ENCODE measurements at regions of chr15 and their contacts with region 1.

Region 1: DNA sequence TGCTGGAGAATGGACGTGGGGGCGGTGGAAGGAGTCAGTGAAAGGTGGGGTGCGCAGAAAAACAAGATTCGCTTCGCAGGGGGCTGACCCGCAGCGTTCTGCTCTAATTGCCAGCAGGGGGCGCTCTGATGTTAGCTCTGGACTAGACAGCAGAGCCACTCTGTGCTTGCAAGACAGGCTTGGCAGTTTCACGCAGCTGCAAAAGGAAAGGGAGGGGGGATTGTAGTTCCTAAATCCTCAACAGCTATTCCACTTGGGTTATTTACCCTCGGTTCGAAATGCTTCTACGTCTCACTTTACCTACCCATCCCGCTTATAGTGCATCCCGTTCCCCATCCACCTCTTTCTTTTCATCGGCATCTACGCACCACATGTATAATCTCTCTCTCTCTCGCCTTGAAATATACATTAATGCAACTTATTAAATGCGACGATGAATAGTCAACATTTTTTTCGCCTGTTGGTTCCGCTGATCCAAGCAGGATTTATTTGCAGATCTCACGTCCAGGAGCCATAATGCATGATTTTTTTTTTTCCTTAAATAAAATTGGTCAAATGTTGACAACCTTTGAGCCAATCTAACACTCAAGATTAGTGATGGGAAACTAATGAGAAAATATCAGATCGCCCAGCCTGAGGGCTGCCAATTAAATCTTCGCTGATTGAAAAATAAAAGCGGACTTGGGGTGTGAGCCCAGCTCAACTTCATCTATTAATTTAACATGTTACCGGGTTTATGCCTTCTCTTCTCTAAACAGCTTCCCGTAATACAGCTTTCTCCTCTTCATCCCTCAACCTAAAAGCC is 216.4 kb downstream of the MEIS2 start:
- DNase-seq: peak; percentile 84
- H3K4me3 Mint-ChIP-seq: no peak overlapping the region
- H3K27ac Mint-ChIP-seq: no peak overlapping the region
- H3K4me1 Mint-ChIP-seq: peaks cover 13% of the 10 kb centered on the region
- H3K27me3 Mint-ChIP-seq: peaks cover 90% of the 10 kb centered on the region

Region 2: DNA sequence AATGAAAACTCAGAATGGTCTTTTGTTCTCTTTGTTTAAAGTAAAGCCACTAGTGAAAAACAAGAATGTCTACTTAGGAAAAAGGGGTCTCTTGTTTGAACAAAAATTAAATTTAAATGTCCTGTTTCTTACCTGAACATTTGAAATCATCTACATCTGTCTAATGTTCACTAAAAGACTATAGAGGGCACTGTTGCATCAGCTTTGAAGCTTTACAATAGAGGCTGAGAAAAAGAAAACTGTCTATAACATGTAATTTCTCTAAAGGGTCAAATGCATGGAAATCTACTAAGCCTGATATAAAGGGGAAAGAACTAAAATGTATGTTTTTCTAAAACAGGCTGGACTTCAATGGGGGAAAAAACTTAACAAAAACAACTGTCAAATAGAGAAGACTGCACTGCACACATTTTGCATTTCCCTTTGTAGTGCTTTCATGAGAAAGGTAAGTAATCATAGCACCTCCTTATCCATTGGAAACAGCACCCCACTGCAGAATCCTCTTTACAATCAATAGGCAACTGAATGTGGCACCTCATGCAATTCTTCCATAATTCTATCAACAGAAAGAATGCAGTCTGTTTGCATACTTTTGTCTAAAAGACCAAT is 1364.3 kb before region 1 on chr15:
- CTCF ChIA-PET with region 1: no interaction called
- intact Hi-C with region 1: loop called (anchors 10 kb)
- DNase-seq: no peak
- H3K4me3 Mint-ChIP-seq: no peak overlapping the region
- H3K27ac Mint-ChIP-seq: no peak overlapping the region
- H3K4me1 Mint-ChIP-seq: peaks cover 6% of the 10 kb centered on the region
- H3K27me3 Mint-ChIP-seq: no peaks in the 10 kb centered on the region

Region 3: DNA sequence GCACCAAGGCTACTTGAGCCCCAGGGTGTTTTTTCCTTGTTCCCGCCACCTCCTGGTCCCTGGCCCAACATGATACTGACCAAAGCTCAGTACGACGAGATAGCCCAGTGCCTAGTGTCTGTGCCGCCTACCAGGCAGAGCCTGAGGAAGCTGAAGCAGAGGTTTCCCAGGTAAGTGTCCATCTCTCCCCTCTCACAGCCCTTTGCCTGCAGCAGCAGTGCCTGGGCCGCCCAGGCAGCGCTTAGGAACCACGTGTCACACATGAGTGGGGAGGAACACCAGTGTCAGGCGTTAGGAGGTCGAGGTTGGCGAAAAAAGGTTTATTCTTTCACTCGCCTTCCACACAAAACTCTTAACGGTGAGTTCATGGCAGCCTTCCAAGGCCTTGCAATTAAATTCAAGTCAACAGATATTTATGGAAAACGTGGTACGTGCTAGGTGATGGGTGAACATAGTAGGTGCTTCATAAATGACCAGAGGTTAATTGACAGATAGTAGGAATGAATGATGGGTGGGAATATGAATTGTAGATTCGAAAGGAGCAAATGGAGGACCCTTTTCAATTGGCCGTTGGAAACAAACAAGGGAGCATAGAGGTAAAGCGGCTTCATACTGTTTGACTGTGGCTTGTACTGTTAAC is 304.0 kb before region 1 on chr15:
- CTCF ChIA-PET with region 1: no interaction called
- intact Hi-C with region 1: loop called (anchors 10 kb)
- DNase-seq: peak; percentile 36
- H3K4me3 Mint-ChIP-seq: peak overlapping the region; percentile 79
- H3K27ac Mint-ChIP-seq: peak overlapping the region; percentile 79
- H3K4me1 Mint-ChIP-seq: peaks cover 25% of the 10 kb centered on the region
- H3K27me3 Mint-ChIP-seq: no peaks in the 10 kb centered on the region

Region 4: DNA sequence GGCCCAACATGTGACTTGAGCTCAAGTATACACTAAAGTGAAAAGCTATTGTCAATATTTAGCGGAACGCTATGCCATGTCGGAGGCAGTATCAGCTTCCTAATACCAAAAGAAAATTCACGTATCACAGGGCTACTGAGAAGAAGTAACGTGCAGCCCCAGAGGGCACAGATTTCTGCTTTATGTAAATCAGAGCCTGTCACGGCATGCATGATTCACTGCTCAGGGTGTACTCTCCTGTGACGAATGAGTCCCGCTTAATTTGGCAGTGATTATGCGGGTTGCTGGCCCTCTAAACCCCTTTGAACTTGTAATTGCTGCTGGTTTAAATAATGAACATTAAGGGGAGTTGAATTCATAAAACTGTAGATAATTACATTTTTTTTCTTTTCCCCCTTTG is 131.1 kb after region 1 on chr15:
- CTCF ChIA-PET with region 1: no interaction called
- intact Hi-C with region 1: no loop called
- DNase-seq: no peak
- H3K4me3 Mint-ChIP-seq: no peak overlapping the region
- H3K27ac Mint-ChIP-seq: no peak overlapping the region
- H3K4me1 Mint-ChIP-seq: no peaks in the 10 kb centered on the region
- H3K27me3 Mint-ChIP-seq: peaks cover 3% of the 10 kb centered on the region

Region 5: DNA sequence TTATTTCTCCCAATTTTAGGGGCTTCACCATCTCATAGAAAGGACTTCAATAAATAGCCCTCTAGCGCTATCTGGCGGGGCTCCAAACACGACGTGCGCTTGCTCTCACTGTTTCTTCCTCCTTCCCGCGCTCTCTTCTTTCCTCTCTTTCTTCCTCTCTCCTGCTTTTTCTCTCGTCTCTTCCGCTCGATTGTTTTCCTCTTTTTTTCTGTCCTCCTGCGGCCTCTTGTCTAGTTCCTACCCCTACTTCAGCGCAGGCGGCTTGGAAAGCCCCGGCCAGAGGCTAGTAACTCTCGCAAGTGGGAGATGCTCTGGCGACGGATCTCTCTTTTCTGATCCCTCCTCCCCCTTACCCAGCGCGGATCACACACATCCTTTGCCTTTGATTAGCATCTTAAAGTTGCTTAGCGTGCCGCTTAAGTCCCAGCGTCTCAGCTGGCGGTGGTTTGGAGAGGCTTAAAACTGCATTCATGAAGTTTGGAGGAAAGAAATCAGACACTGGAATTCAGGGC is 222.6 kb after region 1 on chr15:
- CTCF ChIA-PET with region 1: interaction called, 3 read pairs
- intact Hi-C with region 1: loop called (anchors 2 kb)
- DNase-seq: peak; percentile 30
- H3K4me3 Mint-ChIP-seq: no peak overlapping the region
- H3K27ac Mint-ChIP-seq: no peak overlapping the region
- H3K4me1 Mint-ChIP-seq: peaks cover 26% of the 10 kb centered on the region
- H3K27me3 Mint-ChIP-seq: peaks cover 89% of the 10 kb centered on the region

Region 6: DNA sequence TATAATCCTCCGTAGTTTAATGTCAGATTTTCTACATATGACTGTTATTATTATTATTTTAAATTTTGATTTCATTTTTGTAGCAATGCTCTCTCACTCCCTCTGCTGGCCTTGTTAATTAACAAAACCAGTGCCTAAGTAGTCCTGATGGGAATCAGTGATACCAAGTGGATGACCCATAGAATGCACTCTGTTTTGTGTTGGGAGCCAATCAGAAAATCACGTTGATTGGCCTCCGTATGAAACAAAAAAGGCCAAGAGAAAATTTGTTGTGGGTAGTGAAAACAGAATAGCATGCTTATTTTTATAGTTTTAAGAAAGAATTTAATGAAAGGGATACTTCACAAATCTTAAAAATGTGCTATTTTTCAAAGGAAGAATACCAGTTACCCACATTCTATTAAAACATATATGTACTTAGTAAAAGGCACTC is 250.8 kb after region 1 on chr15:
- CTCF ChIA-PET with region 1: interaction called, 5 read pairs
- intact Hi-C with region 1: loop called (anchors 1 kb)
- DNase-seq: no peak
- H3K4me3 Mint-ChIP-seq: no peak overlapping the region
- H3K27ac Mint-ChIP-seq: no peak overlapping the region
- H3K4me1 Mint-ChIP-seq: no peaks in the 10 kb centered on the region
- H3K27me3 Mint-ChIP-seq: peaks cover 26% of the 10 kb centered on the region

Region 7: GRCh38 chr15:37880009-37880834 is 996.3 kb after region 1 on chr15:
- CTCF ChIA-PET with region 1: interaction called, 3 read pairs
- intact Hi-C with region 1: loop called (anchors 2 kb)
- DNase-seq: peak; percentile 6
- H3K4me3 Mint-ChIP-seq: no peak overlapping the region
- H3K27ac Mint-ChIP-seq: no peak overlapping the region
- H3K4me1 Mint-ChIP-seq: no peaks in the 10 kb centered on the region
- H3K27me3 Mint-ChIP-seq: peaks cover 9% of the 10 kb centered on the region

Region 8: DNA sequence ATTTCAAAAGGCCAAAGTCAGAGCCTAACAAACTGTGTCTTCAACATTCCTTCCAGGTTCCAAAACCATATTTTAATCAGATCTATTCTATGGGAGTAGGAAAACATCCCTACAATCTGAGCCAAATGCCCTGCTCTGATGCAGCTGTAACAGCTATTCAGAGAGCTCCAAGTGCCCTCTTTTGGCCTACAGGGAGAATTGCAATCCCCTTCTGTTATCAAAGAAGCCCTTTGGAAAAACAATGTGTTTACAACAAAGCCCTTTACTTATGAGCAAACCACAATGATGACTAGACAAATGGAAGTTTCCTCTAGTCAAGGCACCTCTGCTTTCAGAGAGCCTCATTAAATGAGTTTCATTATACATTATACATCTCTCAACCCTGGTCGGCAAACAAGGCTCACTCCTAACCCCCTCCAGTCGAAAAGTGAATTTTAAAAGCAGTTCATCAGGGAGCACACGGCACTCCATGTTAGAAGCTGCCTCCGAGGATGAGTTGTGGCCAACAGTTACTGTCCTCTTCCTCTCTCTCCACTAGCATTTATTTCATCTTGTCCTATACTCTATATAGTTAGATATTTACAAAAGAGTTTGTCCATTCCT is 1008.0 kb after region 1 on chr15:
- CTCF ChIA-PET with region 1: no interaction called
- intact Hi-C with region 1: loop called (anchors 1 kb)
- DNase-seq: peak; percentile 5
- H3K4me3 Mint-ChIP-seq: no peak overlapping the region
- H3K27ac Mint-ChIP-seq: no peak overlapping the region
- H3K4me1 Mint-ChIP-seq: no peaks in the 10 kb centered on the region
- H3K27me3 Mint-ChIP-seq: peaks cover 16% of the 10 kb centered on the region